ENCODE measurements at regions of chr3 and their contacts with region 1.

Region 1: DNA sequence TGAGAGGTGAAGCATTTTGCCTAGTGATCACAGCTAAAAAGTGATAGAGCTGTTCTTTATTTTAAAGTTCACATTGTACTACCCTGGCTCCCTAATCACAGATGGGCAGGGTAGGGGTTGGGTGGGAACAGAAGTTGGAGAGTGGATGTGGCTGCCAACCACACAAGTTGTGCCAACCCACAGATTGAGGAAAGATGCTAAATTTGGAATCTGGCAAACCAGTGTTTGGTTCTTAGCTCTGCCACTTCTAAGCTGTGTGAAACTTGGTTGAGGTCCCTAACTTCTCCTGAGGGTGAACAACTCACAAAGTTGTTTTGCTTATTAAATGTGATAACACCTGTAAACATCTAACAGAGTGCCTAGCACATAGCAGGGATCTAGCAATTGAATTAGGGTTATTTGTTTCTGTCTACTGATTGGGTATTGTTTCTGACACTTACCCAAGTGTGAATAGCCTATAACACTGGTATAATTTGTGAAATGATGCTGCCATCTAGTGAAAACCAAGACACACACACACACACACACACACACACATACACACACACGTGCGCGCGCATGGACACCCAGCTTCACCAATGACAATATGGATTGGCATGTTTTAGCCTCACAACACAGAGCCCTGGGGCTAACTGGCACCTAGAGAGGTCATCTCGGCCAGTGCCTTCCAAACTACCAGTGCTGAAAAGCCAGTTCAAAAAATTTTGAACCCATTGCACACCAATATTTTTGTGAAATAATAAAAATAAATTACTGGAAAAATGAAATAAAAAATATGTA is 25.3 kb downstream of the ADGRG7 start:
- DNase-seq: peak; percentile 69
- ATAC-seq: peak; percentile 73
- H3K4me3 Mint-ChIP-seq: peak overlapping the region; percentile 5
- H3K27ac Mint-ChIP-seq: peak overlapping the region; percentile 44
- H3K4me1 Mint-ChIP-seq: peaks cover 17% of the 10 kb centered on the region
- H3K27me3 Mint-ChIP-seq: peaks cover 3% of the 10 kb centered on the region

Region 2: DNA sequence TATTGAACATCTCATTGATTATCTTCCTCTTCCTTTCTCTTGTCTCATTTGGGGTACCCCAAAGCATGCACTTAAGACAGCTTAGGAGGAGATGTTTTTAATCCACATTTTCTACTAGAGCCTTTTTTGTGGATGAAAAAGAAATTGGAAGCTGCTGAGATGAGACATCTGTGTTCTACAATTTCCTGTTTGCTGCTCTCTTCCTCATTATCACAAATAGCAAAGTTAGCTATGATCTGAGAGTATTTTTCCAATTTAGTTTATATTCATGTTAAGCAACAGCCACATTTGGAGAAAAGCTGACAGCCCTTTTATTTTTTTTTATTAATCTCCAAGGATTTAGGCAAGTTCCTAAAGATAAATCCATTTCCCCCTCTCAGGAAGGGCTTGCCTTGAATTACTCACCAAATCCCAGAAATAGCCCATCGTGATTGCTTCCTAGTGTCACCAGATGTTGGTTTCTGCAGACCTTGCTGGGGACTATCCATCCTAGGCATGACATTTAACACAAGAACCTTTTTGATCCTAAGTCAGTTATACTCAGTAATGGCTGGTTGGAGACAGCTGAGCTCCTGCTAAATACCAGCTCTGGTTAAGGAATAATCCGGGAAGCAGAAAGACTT is 449.6 kb before region 1 on chr3:
- CTCF ChIA-PET with region 1: no interaction called
- POLR2A ChIA-PET with region 1: no interaction called
- DNase-seq: no peak
- ATAC-seq: no peak
- H3K4me3 Mint-ChIP-seq: no peak overlapping the region
- H3K27ac Mint-ChIP-seq: no peak overlapping the region
- H3K4me1 Mint-ChIP-seq: peaks cover 4% of the 10 kb centered on the region
- H3K27me3 Mint-ChIP-seq: no peaks in the 10 kb centered on the region

Region 3: GRCh38 chr3:100316641-100317069 is 318.0 kb before region 1 on chr3:
- CTCF ChIA-PET with region 1: interaction called, 18 read pairs
- POLR2A ChIA-PET with region 1: no interaction called
- DNase-seq: peak; percentile 66
- ATAC-seq: peak; percentile 82
- H3K4me3 Mint-ChIP-seq: no peak overlapping the region
- H3K27ac Mint-ChIP-seq: no peak overlapping the region
- H3K4me1 Mint-ChIP-seq: peaks cover 16% of the 10 kb centered on the region
- H3K27me3 Mint-ChIP-seq: no peaks in the 10 kb centered on the region

Region 4: DNA sequence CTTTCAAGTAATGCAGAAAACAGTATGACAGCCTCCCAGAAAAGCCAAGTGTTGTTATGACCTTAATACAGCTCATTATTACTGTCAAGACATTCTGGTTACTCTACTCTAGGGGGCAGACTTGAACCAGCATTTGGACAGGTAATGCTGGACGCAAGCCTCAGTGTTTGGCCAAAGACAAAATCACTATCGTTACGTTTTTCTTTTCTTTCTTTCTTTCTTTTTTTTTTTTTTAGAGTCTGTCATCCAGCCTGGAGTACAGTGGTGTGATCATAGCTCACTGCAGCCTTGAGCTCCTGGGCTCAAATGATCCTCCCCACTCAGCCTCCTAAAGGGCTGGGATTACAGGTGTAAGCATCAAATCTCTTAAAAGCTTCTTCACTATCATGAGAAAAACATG is 171.7 kb before region 1 on chr3:
- CTCF ChIA-PET with region 1: interaction called, 23 read pairs
- POLR2A ChIA-PET with region 1: interaction called, 3 read pairs
- DNase-seq: peak; percentile 50
- ATAC-seq: peak; percentile 87
- H3K4me3 Mint-ChIP-seq: no peak overlapping the region
- H3K27ac Mint-ChIP-seq: no peak overlapping the region
- H3K4me1 Mint-ChIP-seq: peaks cover 8% of the 10 kb centered on the region
- H3K27me3 Mint-ChIP-seq: peaks cover 3% of the 10 kb centered on the region

Region 5: GRCh38 chr3:100492059-100493006 is 142.3 kb before region 1 on chr3 and contains the start of gene TMEM45A:
- CTCF ChIA-PET with region 1: no interaction called
- POLR2A ChIA-PET with region 1: no interaction called
- DNase-seq: peak; percentile 73
- ATAC-seq: peak; percentile 99
- H3K4me3 Mint-ChIP-seq: peak within 1 kb of the TSS; percentile 83
- H3K27ac Mint-ChIP-seq: no peak within 1 kb of the TSS
- H3K4me1 Mint-ChIP-seq: peaks cover 8% of the 10 kb centered on the region
- H3K27me3 Mint-ChIP-seq: peaks cover 50% of the 10 kb centered on the region
- total RNA-seq, gene TMEM45A: 0.29 to 0.42 TPM

Region 6: DNA sequence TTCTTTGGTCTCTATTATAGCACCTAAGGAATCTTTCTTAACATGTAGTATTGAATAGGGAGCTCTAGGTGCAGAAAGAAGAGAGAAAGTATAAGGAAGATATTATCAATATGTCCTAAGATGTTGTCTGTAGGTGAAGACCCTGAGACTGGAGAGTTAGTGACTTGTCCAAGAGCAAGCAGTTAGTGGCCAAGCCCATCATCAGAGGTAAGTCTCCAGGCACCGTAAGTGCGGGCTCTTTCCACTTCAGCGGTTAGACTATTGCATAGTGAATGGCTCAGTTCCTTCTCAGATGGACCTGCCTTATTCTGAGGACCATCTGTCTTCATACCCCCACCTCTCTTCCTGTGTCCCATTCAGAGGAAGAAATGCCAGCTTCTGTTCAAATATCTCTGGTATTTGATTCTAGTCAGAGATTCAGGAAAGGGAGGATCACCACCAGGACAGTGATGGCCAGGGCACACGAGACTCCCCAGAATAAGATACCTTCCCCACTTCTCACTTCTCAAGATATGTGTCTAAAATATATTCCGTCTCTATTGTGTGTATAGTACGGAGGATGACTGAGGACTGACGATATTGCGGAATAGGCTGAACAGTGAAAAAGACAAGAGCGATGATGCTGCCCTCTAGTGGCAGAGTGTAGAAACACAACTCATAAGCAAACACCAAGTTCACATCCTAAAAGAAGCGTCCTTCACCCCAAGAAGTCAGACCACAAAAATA is 44.4 kb before region 1 on chr3:
- CTCF ChIA-PET with region 1: interaction called, 25 read pairs
- POLR2A ChIA-PET with region 1: no interaction called
- DNase-seq: peak; percentile 78
- ATAC-seq: peak; percentile 78
- H3K4me3 Mint-ChIP-seq: peak overlapping the region; percentile 21
- H3K27ac Mint-ChIP-seq: no peak overlapping the region
- H3K4me1 Mint-ChIP-seq: peaks cover 2% of the 10 kb centered on the region
- H3K27me3 Mint-ChIP-seq: peaks cover 10% of the 10 kb centered on the region

Region 7: GRCh38 chr3:100603469-100603868 is 31.2 kb before region 1 on chr3:
- CTCF ChIA-PET with region 1: interaction called, 23 read pairs
- POLR2A ChIA-PET with region 1: no interaction called
- DNase-seq: no peak
- ATAC-seq: peak; percentile 52
- H3K4me3 Mint-ChIP-seq: peak overlapping the region; percentile 71
- H3K27ac Mint-ChIP-seq: peak overlapping the region; percentile 78
- H3K4me1 Mint-ChIP-seq: peaks cover 39% of the 10 kb centered on the region
- H3K27me3 Mint-ChIP-seq: peaks cover 10% of the 10 kb centered on the region

Region 8: DNA sequence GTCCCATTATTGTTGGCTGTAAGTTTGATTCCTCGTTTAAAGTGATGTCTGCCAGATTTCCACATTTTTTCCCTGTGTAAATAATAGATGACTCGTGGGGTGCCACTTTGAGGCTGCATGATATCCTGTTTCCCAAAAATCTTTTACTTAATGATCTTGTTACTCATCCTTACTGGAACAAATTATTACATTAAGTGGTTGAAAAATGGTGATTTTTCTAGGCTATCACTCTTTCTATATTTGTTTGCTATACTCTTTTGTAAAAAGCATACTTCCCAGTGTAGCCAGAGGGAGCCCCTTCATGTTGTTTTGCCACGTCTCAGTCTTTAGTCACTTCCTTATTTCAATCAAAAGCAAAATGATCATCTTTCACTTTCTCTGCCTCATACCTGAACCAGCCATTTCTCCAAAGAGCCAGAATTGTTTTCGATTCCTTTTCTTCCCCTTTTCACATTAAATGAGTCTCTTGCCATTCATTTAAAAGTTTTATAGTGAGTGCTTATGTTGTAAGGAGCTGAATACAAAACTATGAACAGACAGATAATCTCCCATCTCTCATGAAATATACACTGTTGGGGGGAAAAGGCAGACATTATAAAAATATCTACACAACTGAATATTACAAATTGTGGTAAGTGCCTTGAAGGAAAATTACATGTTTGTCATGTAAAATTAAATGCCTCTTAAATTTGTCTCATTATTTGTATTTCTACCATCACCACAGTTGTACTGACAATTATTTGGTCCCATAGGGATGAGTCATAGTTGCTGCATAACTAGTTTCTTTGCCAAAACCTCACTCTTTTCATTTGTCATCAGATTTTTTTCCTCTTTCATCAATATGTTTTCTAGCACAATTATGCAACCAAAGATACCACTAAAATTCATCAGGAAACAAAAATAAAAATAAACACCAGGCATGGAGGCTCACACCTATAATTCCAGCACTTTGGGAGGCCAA is 16.2 kb after region 1 on chr3:
- CTCF ChIA-PET with region 1: interaction called, 48 read pairs
- POLR2A ChIA-PET with region 1: interaction called, 4 read pairs
- DNase-seq: peak; percentile 65
- ATAC-seq: peak; percentile 92
- H3K4me3 Mint-ChIP-seq: peak overlapping the region; percentile 54
- H3K27ac Mint-ChIP-seq: peak overlapping the region; percentile 85
- H3K4me1 Mint-ChIP-seq: peaks cover 15% of the 10 kb centered on the region
- H3K27me3 Mint-ChIP-seq: no peaks in the 10 kb centered on the region

Region 9: GRCh38 chr3:100719136-100719535 is 84.5 kb after region 1 on chr3:
- CTCF ChIA-PET with region 1: interaction called, 23 read pairs
- POLR2A ChIA-PET with region 1: no interaction called
- DNase-seq: no peak
- ATAC-seq: no peak
- H3K4me3 Mint-ChIP-seq: no peak overlapping the region
- H3K27ac Mint-ChIP-seq: no peak overlapping the region
- H3K4me1 Mint-ChIP-seq: peaks cover 30% of the 10 kb centered on the region
- H3K27me3 Mint-ChIP-seq: no peaks in the 10 kb centered on the region

Measured in activated CD8-positive, alpha-beta T cell treated with anti-CD3 and anti-CD28 coated beads, Interleukin-2, amount 10 ng/mL, durations not matched to agents 7 days and 5 days (primary cell).